Activated CD4-positive, alpha-beta memory T cell treated with anti-CD3 and anti-CD28 coated beads for 36 hours (primary cell): ENCODE measurements at regions of chr4 and their contacts with region 1.

Region 1: GRCh38 chr4:73019462-73020047 is 50.0 kb downstream of the COX18 start:
- DNase-seq: no peak
- H3K4me3 Mint-ChIP-seq: no peak overlapping the region
- H3K27ac Mint-ChIP-seq: no peak overlapping the region
- H3K4me1 Mint-ChIP-seq: no peaks in the 10 kb centered on the region
- H3K27me3 Mint-ChIP-seq: peaks cover 5% of the 10 kb centered on the region

Region 2: DNA sequence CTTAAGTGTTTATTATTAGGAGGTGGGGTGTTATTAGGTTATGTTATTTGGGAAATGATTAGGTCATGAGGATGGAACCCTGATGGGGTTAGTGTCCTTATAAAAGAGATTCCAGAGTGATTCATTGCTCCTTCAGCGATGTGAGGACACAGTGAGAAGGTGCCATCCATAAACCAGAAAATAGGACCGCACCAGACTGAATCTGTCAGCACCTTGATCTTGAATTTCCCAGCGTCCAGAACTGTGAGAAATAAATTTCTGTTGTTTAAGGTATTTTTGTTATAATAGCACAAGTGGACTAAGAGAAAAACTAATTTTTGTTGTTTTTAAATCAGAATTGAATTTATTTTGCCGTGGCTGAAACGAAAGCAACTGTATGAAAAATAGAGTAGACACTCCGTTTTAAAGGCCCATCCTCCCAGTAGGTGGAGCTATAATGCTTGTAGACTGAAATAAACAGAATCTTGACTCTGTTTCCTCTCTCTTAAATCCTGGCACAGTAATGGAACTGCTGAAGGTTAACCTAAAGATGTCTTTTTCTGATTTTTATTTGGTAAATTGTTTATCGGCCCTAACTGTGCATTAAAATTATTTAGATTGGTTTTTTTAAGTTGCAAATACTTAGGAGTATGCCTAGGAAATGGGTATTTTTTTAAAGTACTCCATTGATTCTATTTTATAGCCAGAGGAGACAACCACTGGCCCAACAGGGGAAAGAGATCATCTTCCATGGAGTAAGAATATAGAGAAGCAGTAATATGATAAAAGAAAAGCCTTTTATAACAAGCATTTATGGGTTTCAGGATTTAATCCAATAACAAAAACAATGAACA is 317.4 kb before region 1 on chr4:
- CTCF ChIA-PET with region 1: interaction called, 7 read pairs
- POLR2A ChIA-PET with region 1: no interaction called
- intact Hi-C with region 1: loop called (anchors 1 kb)
- DNase-seq: no peak
- H3K4me3 Mint-ChIP-seq: peak overlapping the region; percentile 69
- H3K27ac Mint-ChIP-seq: no peak overlapping the region
- H3K4me1 Mint-ChIP-seq: no peaks in the 10 kb centered on the region
- H3K27me3 Mint-ChIP-seq: no peaks in the 10 kb centered on the region

Region 3: DNA sequence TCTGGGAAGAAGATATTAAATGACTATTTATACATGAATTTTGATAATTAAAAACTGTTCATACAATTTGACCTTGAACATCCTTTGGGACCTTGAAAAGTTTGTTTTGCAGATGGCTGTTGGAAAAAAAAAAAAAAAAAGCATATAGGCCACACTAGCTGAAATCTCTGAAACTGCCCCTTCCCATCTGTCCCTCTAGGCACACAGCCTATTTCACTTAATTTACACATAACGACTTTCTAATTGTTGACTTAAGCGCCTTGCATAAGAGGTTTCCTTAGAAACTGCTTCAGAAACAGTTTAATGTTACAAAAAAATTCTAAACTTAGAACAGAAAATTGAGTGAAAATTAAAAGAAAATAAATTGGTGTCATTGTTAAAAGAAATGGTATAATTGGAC is 81.0 kb before region 1 on chr4:
- CTCF ChIA-PET with region 1: no interaction called
- POLR2A ChIA-PET with region 1: no interaction called
- intact Hi-C with region 1: no loop called
- DNase-seq: no peak
- H3K4me3 Mint-ChIP-seq: no peak overlapping the region
- H3K27ac Mint-ChIP-seq: no peak overlapping the region
- H3K4me1 Mint-ChIP-seq: peaks cover 1% of the 10 kb centered on the region
- H3K27me3 Mint-ChIP-seq: peaks cover 2% of the 10 kb centered on the region

Region 4: GRCh38 chr4:73069338-73070073 is 50.0 kb after region 1 on chr4 and contains the start of gene COX18:
- CTCF ChIA-PET with region 1: no interaction called
- POLR2A ChIA-PET with region 1: no interaction called
- intact Hi-C with region 1: no loop called
- DNase-seq: peak; percentile 97
- H3K4me3 Mint-ChIP-seq: peak within 1 kb of the TSS; percentile 83
- H3K27ac Mint-ChIP-seq: peak within 1 kb of the TSS; percentile 99
- H3K4me1 Mint-ChIP-seq: peaks cover 29% of the 10 kb centered on the region
- H3K27me3 Mint-ChIP-seq: no peaks in the 10 kb centered on the region
- total RNA-seq, gene COX18: 18.6 to 20.6 TPM

Region 5: GRCh38 chr4:73161527-73162185 is 142.1 kb after region 1 on chr4:
- CTCF ChIA-PET with region 1: no interaction called
- POLR2A ChIA-PET with region 1: no interaction called
- intact Hi-C with region 1: no loop called
- DNase-seq: no peak
- H3K4me3 Mint-ChIP-seq: no peak overlapping the region
- H3K27ac Mint-ChIP-seq: no peak overlapping the region
- H3K4me1 Mint-ChIP-seq: peaks cover 3% of the 10 kb centered on the region
- H3K27me3 Mint-ChIP-seq: no peaks in the 10 kb centered on the region